ENCODE measurements at regions of chr10 and their contacts with region 1.

Region 1: GRCh38 chr10:73879296-73880173 is 5.2 kb upstream of the CAMK2G start:
- DNase-seq: peak; percentile 96
- ATAC-seq: peak; percentile 98
- H3K4me3 Mint-ChIP-seq: peak overlapping the region; percentile 5
- H3K27ac Mint-ChIP-seq: peak overlapping the region; percentile 66
- H3K4me1 Mint-ChIP-seq: peaks cover 37% of the 10 kb centered on the region
- H3K27me3 Mint-ChIP-seq: peaks cover 15% of the 10 kb centered on the region

Region 2: DNA sequence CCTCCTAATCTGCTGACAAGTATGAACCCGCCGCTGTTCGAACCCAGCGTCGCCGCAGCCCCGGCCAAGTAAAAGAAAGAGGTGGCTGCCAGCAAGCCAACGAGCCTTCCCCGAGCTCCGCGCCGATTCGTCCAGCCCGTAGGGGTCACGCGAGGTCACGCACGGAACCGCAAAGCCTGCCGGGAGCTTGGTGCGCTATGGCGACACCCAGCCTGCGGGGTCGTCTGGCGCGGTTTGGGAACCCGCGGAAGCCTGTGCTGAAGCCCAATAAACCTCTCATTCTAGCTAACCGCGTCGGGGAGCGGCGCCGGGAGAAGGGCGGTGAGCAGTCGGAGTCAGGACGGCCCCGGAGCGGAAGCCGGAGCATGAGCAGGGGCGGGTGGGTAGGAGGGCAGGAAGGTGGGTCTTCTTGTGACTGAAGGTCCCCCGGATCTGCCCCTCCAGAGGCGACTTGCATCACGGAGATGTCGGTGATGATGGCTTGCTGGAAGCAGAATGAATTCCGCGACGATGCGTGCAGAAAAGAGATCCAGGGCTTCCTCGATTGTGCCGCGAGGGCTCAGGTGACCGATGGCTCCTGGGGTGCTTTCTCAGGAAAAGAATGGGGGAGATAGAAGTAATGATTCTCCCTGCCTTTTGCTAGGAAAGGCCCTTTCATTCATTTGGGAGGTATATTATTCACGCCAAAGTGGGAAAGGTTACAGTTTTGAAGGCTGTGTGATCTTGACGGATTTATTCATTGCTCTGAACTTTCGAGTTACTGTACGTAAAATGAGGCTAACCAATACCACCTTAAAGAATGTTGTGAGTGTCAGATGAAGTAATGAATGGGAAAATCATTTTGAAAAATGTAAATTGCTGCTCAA is 97.4 kb before region 1 on chr10 and contains the start of gene CHCHD1:
- CTCF ChIA-PET with region 1: interaction called, 11 read pairs
- DNase-seq: peak; percentile 96
- ATAC-seq: peak; percentile 73
- H3K4me3 Mint-ChIP-seq: peak within 1 kb of the TSS; percentile 87
- H3K27ac Mint-ChIP-seq: peak within 1 kb of the TSS; percentile 97
- H3K4me1 Mint-ChIP-seq: peaks cover 51% of the 10 kb centered on the region
- H3K27me3 Mint-ChIP-seq: no peaks in the 10 kb centered on the region
- total RNA-seq, gene CHCHD1: 29.0 to 36.2 TPM

Region 3: DNA sequence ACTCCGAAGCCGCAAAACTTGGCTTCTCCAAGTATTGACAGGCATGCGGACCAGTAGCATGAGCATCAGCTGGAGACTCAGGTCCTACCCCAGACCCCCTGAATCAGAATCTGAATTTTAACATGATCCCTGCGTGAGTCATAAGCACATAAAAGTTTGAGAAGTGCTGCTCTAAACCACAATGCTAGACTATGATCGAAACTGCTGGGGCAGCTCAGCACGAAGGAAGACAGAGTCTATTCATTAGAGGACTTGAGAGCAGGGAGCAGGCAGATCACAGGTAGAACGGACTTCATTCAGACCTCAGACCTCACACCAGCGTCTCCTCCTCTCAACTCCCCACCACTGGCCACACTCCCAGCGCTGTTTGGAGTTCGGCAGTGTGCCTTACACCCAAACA is 22.1 kb before region 1 on chr10:
- CTCF ChIA-PET with region 1: interaction called, 411 read pairs
- DNase-seq: peak; percentile 84
- ATAC-seq: peak; percentile 84
- H3K4me3 Mint-ChIP-seq: peak overlapping the region; percentile 43
- H3K27ac Mint-ChIP-seq: peak overlapping the region; percentile 85
- H3K4me1 Mint-ChIP-seq: peaks cover 67% of the 10 kb centered on the region
- H3K27me3 Mint-ChIP-seq: no peaks in the 10 kb centered on the region

Region 4: GRCh38 chr10:73940634-73941221 is 61.2 kb after region 1 on chr10:
- CTCF ChIA-PET with region 1: interaction called, 642 read pairs
- DNase-seq: peak; percentile 88
- ATAC-seq: peak; percentile 100
- H3K4me3 Mint-ChIP-seq: no peak overlapping the region
- H3K27ac Mint-ChIP-seq: peak overlapping the region; percentile 80
- H3K4me1 Mint-ChIP-seq: peaks cover 12% of the 10 kb centered on the region
- H3K27me3 Mint-ChIP-seq: peaks cover 11% of the 10 kb centered on the region

Region 5: GRCh38 chr10:74081192-74081803 is 201.8 kb after region 1 on chr10:
- CTCF ChIA-PET with region 1: interaction called, 42 read pairs
- DNase-seq: peak; percentile 58
- ATAC-seq: peak; percentile 34
- H3K4me3 Mint-ChIP-seq: no peak overlapping the region
- H3K27ac Mint-ChIP-seq: no peak overlapping the region
- H3K4me1 Mint-ChIP-seq: peaks cover 53% of the 10 kb centered on the region
- H3K27me3 Mint-ChIP-seq: no peaks in the 10 kb centered on the region

Measured in activated CD8-positive, alpha-beta memory T cell treated with anti-CD3 and anti-CD28 coated beads, Interleukin-2, amount 10 ng/mL, durations not matched to agents 7 days and 5 days (primary cell).